ENCODE measurements at regions of chr3 and their contacts with region 1.

Region 1: GRCh38 chr3:40920041-40920440 is 279.3 kb upstream of the CTNNB1 start:
- DNase-seq: no peak
- ATAC-seq: no peak
- H3K4me3 ChIP-seq: no peak overlapping the region
- H3K27ac ChIP-seq: no peak overlapping the region
- H3K4me1 ChIP-seq: no peaks in the 10 kb centered on the region
- H3K27me3 ChIP-seq: no peaks in the 10 kb centered on the region
- CTCF ChIP-seq: no peak
- POLR2A ChIP-seq: no peak
- RAD21 ChIP-seq: no peak

Region 2: DNA sequence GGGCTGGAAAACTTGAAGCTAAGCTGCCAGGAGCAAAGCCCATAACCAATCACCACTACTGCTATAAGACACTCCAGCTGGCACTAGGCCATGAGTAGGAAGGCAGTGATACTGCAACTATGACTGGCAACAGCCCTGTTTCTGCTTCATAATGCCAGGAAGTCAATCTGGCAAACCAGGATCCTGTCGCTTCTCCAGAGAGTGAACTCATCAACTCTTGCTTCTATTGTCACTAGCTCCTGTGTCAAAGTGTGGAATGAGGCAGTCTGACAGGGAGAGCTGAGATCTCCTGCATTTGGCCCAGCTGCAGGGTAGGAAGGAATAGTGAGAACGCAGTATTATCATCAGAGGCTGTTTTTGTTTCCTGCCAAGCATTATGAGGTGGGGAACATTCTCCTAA is 384.6 kb after region 1 on chr3:
- CTCF ChIA-PET with region 1: no interaction called
- POLR2A ChIA-PET with region 1: interaction called, 11 read pairs
- dilution Hi-C with region 1: no loop called
- in situ Hi-C with region 1: no loop called
- intact Hi-C with region 1: no loop called
- DNase-seq: peak; percentile 15
- ATAC-seq: no peak
- H3K4me3 ChIP-seq: no peak overlapping the region
- H3K27ac ChIP-seq: no peak overlapping the region
- H3K4me1 ChIP-seq: no peaks in the 10 kb centered on the region
- H3K27me3 ChIP-seq: no peaks in the 10 kb centered on the region
- CTCF ChIP-seq: no peak
- POLR2A ChIP-seq: no peak
- RAD21 ChIP-seq: no peak

Region 3: DNA sequence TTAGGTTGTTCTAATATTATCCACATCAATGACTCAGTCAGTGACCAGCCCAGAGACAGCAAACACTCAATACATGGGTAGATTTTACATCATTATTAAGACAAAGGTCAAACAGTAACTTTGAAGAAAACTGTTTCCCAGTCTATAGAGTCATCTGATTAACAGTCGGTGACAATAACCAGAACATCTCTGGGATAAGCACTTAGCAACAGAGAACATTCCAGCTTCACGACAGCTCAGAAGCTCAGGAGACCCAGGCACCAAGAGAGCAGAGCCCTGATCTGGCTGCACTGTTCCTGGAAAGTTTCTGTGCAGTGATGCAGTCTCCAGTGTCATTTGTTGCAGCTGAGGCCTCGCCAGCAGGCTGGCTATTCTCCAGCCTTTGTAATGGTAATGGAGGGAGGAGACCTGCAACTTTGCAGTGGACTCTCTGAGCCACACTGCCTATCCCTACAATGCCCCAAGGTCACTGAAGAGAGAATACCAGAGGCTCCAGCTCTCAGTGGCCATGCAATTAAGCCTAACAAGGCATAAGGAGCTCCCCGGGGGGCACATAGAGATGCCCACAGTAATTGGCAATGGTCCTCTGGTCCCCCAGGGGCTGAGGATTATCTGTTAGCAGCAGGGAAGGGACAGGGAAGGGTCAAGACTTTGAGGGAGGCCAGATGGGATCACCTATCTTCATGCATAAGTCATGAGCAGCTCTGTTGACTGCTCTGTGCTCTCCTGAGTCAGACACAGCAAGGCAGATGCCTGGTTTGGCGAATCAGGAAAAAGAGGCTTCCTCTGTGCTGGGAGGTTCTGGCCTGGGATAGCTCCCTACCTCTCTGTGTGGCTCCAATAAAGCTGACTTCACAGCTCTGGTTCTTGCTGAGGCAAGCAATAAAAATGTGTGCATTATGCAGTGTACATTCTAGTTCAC is 442.9 kb after region 1 on chr3:
- CTCF ChIA-PET with region 1: no interaction called
- POLR2A ChIA-PET with region 1: no interaction called
- dilution Hi-C with region 1: no loop called
- in situ Hi-C with region 1: no loop called
- intact Hi-C with region 1: no loop called
- DNase-seq: no peak
- ATAC-seq: no peak
- H3K4me3 ChIP-seq: no peak overlapping the region
- H3K27ac ChIP-seq: no peak overlapping the region
- H3K4me1 ChIP-seq: no peaks in the 10 kb centered on the region
- H3K27me3 ChIP-seq: no peaks in the 10 kb centered on the region
- CTCF ChIP-seq: no peak
- POLR2A ChIP-seq: no peak
- RAD21 ChIP-seq: no peak